B cell (primary cell): ENCODE measurements at regions of chr11 and their contacts with region 1.

Region 1: GRCh38 chr11:72840780-72841179 is 26.6 kb downstream of the ATG16L2 start:
- DNase-seq: no peak
- ATAC-seq: no peak
- H3K4me3 ChIP-seq: no peak overlapping the region
- H3K4me3 Mint-ChIP-seq: no peak overlapping the region
- H3K27ac ChIP-seq: no peak overlapping the region
- H3K27ac Mint-ChIP-seq: peak overlapping the region; percentile 20
- H3K4me1 ChIP-seq: no peaks in the 10 kb centered on the region
- H3K4me1 Mint-ChIP-seq: no peaks in the 10 kb centered on the region
- H3K27me3 ChIP-seq: no peaks in the 10 kb centered on the region
- H3K27me3 Mint-ChIP-seq: no peaks in the 10 kb centered on the region
- CTCF ChIP-seq: no peak

Region 2: GRCh38 chr11:72573072-72573854 is 267.5 kb before region 1 on chr11:
- CTCF ChIA-PET with region 1: no interaction called
- POLR2A ChIA-PET with region 1: no interaction called
- intact Hi-C with region 1: no loop called
- DNase-seq: no peak
- ATAC-seq: peak; percentile 71
- H3K4me3 ChIP-seq: no peak overlapping the region
- H3K4me3 Mint-ChIP-seq: no peak overlapping the region
- H3K27ac ChIP-seq: no peak overlapping the region
- H3K27ac Mint-ChIP-seq: no peak overlapping the region
- H3K4me1 ChIP-seq: no peaks in the 10 kb centered on the region
- H3K4me1 Mint-ChIP-seq: peaks cover 5% of the 10 kb centered on the region
- H3K27me3 ChIP-seq: peaks cover 0 to 16% (median 6%) of the 10 kb centered on the region in 4 experiments
- H3K27me3 Mint-ChIP-seq: peaks cover 53% of the 10 kb centered on the region
- CTCF ChIP-seq: peak; percentile 45

Region 3: GRCh38 chr11:72856551-72857345 is 16.0 kb after region 1 on chr11:
- CTCF ChIA-PET with region 1: interaction called, 3 read pairs
- POLR2A ChIA-PET with region 1: interaction called, 13 read pairs
- intact Hi-C with region 1: no loop called
- DNase-seq: no peak
- ATAC-seq: no peak
- H3K4me3 ChIP-seq: no peak overlapping the region
- H3K4me3 Mint-ChIP-seq: no peak overlapping the region
- H3K27ac ChIP-seq: peak overlapping the region in 1 of 2 donors; percentile 36
- H3K27ac Mint-ChIP-seq: peak overlapping the region; percentile 7
- H3K4me1 ChIP-seq: no peaks in the 10 kb centered on the region
- H3K4me1 Mint-ChIP-seq: peaks cover 12% of the 10 kb centered on the region
- H3K27me3 ChIP-seq: no peaks in the 10 kb centered on the region
- H3K27me3 Mint-ChIP-seq: no peaks in the 10 kb centered on the region
- CTCF ChIP-seq: no peak